ENCODE measurements at regions of chr3 and their contacts with region 1.

Region 1: DNA sequence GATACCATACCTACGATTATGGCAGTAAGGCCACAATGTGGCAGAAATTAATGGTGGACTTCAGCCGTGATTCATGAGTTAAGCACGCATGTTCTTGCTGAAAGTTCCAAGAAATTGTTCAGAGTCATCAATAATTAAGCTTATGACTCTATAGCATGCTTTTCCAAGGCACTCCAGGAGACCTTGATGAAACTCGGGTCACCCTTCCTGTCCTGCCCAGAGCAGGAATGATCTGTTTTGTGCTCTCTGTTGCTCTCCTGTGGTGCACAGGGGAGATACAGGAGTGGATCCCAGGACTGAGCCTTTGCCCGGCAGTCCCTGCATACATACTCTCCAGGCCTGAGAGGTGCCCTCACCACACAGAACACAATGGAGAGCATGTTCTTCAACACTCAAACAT is 141.6 kb upstream of the SLC2A2 start:
- DNase-seq: peak; percentile 98

Region 2: GRCh38 chr3:170961616-170962400 is 206.3 kb before region 1 on chr3:
- in situ Hi-C with region 1: loop called (anchors 5 kb)
- DNase-seq: peak; percentile 91

Region 3: GRCh38 chr3:171064461-171064860 is 103.6 kb before region 1 on chr3:
- in situ Hi-C with region 1: loop called (anchors 5 kb)
- DNase-seq: peak; percentile 90